ENCODE measurements at regions of chr12 and their contacts with region 1.

Region 1: GRCh38 chr12:75658901-75659383 is 147.5 kb upstream of the KRR1 start:
- DNase-seq: peak; percentile 86
- H3K4me3 ChIP-seq: no peak overlapping the region
- H3K27ac ChIP-seq: peak overlapping the region; percentile 98
- H3K4me1 ChIP-seq: peaks cover 66% of the 10 kb centered on the region
- H3K27me3 ChIP-seq: no peaks in the 10 kb centered on the region
- CTCF ChIP-seq: no peak

Region 2: DNA sequence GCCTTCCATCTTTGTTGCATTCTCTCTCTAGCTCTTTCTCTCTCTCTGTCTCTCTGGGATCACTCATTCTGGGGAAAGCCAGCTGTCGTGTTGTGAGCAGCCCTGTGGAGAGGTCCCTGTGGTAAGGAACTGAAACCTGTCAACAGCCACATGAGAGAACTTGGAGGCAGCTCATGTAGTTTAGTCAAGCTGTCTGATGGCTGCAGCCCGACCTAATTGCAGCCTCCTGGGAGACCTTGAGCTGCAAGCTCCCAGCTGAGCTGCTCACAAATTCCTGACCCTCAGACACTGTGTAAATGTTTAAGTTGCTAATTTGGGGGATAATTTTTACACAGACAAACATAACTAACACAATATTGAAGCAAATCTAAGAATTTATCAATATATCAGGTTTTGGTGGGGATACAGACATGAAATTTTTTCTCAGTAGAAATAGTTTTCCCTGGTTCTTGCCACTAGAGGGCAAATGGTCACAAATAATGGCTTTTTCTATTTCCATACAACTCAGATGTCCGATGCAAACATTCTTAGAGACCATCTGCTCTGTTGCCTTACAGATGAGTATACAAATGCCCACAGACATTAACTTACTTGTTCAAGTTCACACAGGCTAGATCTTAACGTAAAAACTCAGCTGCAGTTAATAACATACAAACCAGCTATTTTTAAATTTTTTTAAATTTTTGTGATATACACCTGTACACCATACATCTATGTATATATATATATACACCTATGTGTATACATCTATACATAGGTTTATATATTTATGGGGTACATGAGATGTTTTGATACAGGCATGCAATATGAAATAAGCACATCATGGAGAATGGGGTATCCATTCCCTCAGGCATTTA is 132.1 kb before region 1 on chr12:
- CTCF ChIA-PET with region 1: no interaction called
- dilution Hi-C with region 1: no loop called
- in situ Hi-C with region 1: no loop called
- intact Hi-C with region 1: loop called (anchors 5 kb)
- DNase-seq: peak; percentile 34
- H3K4me3 ChIP-seq: no peak overlapping the region
- H3K27ac ChIP-seq: no peak overlapping the region
- H3K4me1 ChIP-seq: no peaks in the 10 kb centered on the region
- H3K27me3 ChIP-seq: no peaks in the 10 kb centered on the region
- CTCF ChIP-seq: peak; percentile 47 to 69

Region 3: DNA sequence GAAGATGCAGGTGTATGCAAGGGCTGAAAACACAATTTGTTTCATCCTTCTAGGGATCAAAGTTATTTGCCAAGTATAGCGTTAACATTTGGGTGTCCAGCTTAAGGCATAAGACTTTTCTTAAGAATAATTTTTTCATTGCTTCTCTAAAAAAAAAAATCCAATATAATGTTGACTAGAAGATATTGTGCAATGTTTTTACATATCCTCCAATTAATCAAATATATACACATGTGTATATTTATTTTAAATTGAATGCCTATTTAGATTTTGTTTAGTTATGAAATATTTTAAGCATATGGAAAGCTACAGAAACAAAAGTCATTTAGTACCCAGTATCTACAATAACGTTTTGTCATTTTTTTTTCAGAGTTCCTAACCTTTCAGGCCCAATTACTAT is 119.1 kb before region 1 on chr12:
- CTCF ChIA-PET with region 1: no interaction called
- dilution Hi-C with region 1: no loop called
- in situ Hi-C with region 1: no loop called
- intact Hi-C with region 1: no loop called
- DNase-seq: no peak
- H3K4me3 ChIP-seq: no peak overlapping the region
- H3K27ac ChIP-seq: no peak overlapping the region
- H3K4me1 ChIP-seq: no peaks in the 10 kb centered on the region
- H3K27me3 ChIP-seq: no peaks in the 10 kb centered on the region
- CTCF ChIP-seq: no peak

Region 4: GRCh38 chr12:75641031-75641780 is 17.7 kb before region 1 on chr12:
- CTCF ChIA-PET with region 1: no interaction called
- dilution Hi-C with region 1: no loop called
- in situ Hi-C with region 1: no loop called
- intact Hi-C with region 1: loop called (anchors 1 kb)
- DNase-seq: peak; percentile 93
- H3K4me3 ChIP-seq: no peak overlapping the region
- H3K27ac ChIP-seq: peak overlapping the region; percentile 100
- H3K4me1 ChIP-seq: peaks cover 48% of the 10 kb centered on the region
- H3K27me3 ChIP-seq: no peaks in the 10 kb centered on the region
- CTCF ChIP-seq: peak in 1 of 2 donors; percentile 5

Region 5: GRCh38 chr12:75722714-75723200 is 63.8 kb after region 1 on chr12:
- CTCF ChIA-PET with region 1: no interaction called
- dilution Hi-C with region 1: no loop called
- in situ Hi-C with region 1: no loop called
- intact Hi-C with region 1: loop called (anchors 1 kb)
- DNase-seq: peak; percentile 85
- H3K4me3 ChIP-seq: no peak overlapping the region
- H3K27ac ChIP-seq: peak overlapping the region; percentile 88
- H3K4me1 ChIP-seq: peaks cover 59% of the 10 kb centered on the region
- H3K27me3 ChIP-seq: no peaks in the 10 kb centered on the region
- CTCF ChIP-seq: no peak

Region 6: GRCh38 chr12:75820848-75821578 is 162.1 kb after region 1 on chr12:
- CTCF ChIA-PET with region 1: no interaction called
- dilution Hi-C with region 1: no loop called
- in situ Hi-C with region 1: no loop called
- intact Hi-C with region 1: loop called (anchors 1 kb)
- DNase-seq: peak; percentile 79
- H3K4me3 ChIP-seq: no peak overlapping the region
- H3K27ac ChIP-seq: peak overlapping the region; percentile 44
- H3K4me1 ChIP-seq: peaks cover 52% of the 10 kb centered on the region
- H3K27me3 ChIP-seq: no peaks in the 10 kb centered on the region
- CTCF ChIP-seq: peak in 1 of 2 donors; percentile 40

Region 7: DNA sequence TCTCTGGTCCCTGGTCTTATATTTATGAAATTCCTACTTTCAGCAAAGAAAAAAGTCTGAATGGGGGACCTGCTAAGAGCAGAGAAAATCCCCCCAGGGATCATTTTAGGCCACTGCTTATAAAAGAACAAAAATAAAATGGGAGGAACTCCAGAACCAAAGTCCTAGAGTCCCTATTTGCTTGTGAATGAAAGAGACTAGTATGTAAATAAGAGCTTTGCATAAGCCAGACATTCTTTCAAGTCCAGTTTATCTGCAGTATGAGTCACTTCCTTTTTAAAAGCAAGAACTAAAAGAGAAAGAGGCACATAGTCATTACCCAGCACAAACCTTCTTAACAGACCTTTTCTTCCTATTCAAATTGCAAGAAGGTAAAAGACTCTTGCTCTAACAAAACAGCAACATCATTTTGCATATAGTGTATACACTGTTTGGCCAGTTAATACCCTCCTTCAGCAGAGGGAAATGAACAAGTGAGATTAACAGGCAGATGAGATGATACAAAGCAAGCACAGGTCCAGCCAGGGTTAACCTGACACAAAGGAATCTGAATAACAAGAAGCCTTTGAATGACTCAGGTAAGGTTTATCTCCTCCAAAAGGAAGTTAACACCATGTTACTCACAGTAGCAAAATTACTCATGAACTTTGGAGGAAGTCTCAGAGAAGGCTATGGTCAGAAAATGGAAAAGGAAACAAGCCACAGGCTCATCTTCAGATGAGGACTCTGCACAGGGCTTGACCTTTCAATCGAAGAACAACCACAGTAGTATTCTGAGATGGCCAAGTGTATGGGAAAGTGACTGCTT is 285.4 kb after region 1 on chr12:
- CTCF ChIA-PET with region 1: no interaction called
- dilution Hi-C with region 1: no loop called
- in situ Hi-C with region 1: no loop called
- intact Hi-C with region 1: no loop called
- DNase-seq: peak; percentile 93
- H3K4me3 ChIP-seq: peak overlapping the region in 2 of 3 experiments; percentile 1 to 2
- H3K27ac ChIP-seq: peak overlapping the region; percentile 87
- H3K4me1 ChIP-seq: peaks cover 34% of the 10 kb centered on the region
- H3K27me3 ChIP-seq: no peaks in the 10 kb centered on the region
- CTCF ChIP-seq: no peak

Region 8: DNA sequence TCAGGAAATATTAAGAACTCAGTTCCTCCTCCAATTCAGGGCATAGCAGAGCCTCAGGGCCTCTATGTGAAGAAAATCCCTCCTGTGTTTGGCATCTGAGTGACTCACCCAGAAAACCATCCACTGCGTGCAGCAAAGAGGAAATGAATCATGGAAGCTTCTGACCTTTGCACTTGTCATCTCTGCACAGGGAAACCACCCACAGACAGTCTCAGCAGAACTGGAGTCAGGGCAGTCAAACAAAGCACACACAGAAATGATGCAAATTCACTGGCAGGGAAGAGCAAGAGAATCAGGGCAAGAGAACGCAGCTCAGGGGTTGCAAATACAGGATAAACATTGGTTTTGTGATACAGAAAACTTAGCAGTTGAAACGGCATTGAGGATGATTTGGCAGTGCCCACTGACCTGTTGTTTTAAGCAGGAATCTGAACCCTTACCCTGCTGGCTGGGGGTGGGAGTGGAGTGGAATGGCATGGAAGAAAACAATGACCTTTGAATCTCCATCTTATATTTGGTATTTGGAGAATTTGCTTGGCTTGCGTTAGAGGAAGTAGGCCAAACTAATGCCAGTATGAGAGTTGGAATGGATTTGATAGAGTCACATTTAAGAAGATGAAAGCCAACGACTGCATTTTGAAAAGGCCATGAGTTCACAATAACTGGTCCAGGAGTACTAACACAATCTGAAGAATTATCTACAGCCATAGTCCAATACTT is 319.2 kb after region 1 on chr12:
- CTCF ChIA-PET with region 1: no interaction called
- dilution Hi-C with region 1: no loop called
- in situ Hi-C with region 1: no loop called
- intact Hi-C with region 1: loop called (anchors 2 kb)
- DNase-seq: peak; percentile 99
- H3K4me3 ChIP-seq: no peak overlapping the region
- H3K27ac ChIP-seq: peak overlapping the region; percentile 96
- H3K4me1 ChIP-seq: peaks cover 37% of the 10 kb centered on the region
- H3K27me3 ChIP-seq: no peaks in the 10 kb centered on the region
- CTCF ChIP-seq: no peak

Region 9: GRCh38 chr12:76455582-76456345 is 796.8 kb after region 1 on chr12:
- CTCF ChIA-PET with region 1: interaction called, 3 read pairs
- dilution Hi-C with region 1: no loop called
- in situ Hi-C with region 1: no loop called
- intact Hi-C with region 1: loop called (anchors 10 kb)
- DNase-seq: peak; percentile 89
- H3K4me3 ChIP-seq: no peak overlapping the region
- H3K27ac ChIP-seq: peak overlapping the region; percentile 97
- H3K4me1 ChIP-seq: peaks cover 27% of the 10 kb centered on the region
- H3K27me3 ChIP-seq: no peaks in the 10 kb centered on the region
- CTCF ChIP-seq: peak; percentile 70 to 73